Caco-2 (cell line): ENCODE measurements at regions of chr19 and their contacts with region 1.

Region 1: GRCh38 chr19:38315657-38316476 is at the start of gene YIF1B:
- DNase-seq: peak; percentile 98 to 99
- H3K4me3 ChIP-seq: peak within 1 kb of the TSS; percentile 61
- H3K4me3 Mint-ChIP-seq: peak within 1 kb of the TSS; percentile 96
- H3K27ac Mint-ChIP-seq: peak within 1 kb of the TSS; percentile 91
- H3K4me1 ChIP-seq: peaks cover 4% of the 10 kb centered on the region; the same call in 1 of the 2 replicates
- H3K4me1 Mint-ChIP-seq: peaks cover 11% of the 10 kb centered on the region
- H3K27me3 ChIP-seq: no peaks in the 10 kb centered on the region
- H3K27me3 Mint-ChIP-seq: no peaks in the 10 kb centered on the region
- CTCF ChIP-seq: no peak
- total RNA-seq, gene YIF1B: 61.7 and 66.7 TPM in 2 replicates

Region 2: DNA sequence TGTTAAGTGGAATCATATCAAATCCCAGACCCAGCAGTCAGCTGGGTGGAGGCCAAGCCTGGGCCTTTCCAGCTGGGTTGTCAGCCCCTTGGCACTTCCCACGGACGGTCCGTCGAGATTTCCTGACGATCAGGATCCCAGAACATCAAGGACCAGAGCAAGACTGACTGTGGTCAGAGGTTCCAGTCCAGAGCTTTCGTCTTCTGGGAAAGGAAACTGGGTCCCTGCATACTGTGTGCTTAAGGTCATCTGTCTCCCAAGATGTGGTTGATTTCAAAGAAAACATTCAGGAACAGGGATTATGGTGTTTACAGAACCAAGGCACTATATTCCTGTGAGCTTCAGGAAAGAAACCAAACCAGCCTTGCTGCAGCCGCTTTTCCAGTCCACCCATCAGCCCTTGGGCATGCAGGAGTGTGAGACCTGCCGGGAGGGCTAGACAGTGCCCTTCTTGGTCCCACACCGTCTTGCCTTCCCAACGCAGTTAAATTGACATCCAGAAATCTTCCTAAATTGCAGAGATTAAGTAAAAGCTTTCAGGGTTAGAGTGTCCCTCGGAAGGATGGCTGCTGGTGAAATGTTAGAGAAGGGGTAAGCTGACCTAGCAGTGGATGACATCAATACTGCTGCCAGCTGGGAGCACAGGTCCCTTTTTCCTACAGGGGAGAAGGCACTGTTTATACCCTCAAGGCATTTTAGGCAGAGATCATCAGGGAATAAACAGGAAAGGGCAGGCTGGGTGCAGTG is 16.9 kb before region 1 on chr19:
- CTCF ChIA-PET with region 1: no interaction called
- POLR2A ChIA-PET with region 1: interaction called, 13 read pairs
- intact Hi-C with region 1: no loop called
- DNase-seq: no peak
- H3K4me3 ChIP-seq: no peak overlapping the region
- H3K4me3 Mint-ChIP-seq: peak overlapping the region; percentile 5
- H3K27ac Mint-ChIP-seq: peak overlapping the region; percentile 93
- H3K4me1 ChIP-seq: peaks cover 44% of the 10 kb centered on the region
- H3K4me1 Mint-ChIP-seq: peaks cover 14% of the 10 kb centered on the region
- H3K27me3 ChIP-seq: no peaks in the 10 kb centered on the region
- H3K27me3 Mint-ChIP-seq: no peaks in the 10 kb centered on the region
- CTCF ChIP-seq: no peak